Mammary epithelial cell (primary cell): ENCODE measurements at regions of chr9 and their contacts with region 1.

Region 1: DNA sequence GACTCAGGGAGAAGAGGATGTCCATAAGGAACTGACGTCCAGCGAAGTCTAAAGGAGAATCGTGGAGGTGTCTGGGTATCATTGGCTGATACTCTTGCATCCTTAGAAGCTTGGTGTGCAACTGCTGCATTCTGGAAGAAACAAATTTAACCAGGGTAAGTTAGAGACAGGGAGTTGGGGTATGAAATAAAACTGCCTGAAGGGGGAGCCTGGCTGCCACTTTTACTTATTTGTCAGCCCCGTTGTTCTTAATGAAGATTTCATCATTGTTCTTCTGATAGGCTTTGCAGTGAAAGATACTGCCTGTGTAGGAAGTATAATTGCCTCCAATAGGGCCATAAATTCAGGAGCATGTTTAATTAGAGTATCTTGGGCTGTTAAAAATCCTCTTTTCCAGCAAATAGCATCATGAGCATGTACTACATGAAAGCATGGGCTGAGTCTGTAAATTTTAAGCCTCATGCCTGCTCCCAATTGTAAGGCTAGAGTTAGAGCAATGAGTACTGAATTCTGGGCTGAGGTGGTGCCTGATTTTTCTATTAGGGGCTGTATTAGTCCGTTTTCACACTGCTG is 1264.5 kb upstream of the ACO1 start:
- DNase-seq: peak; percentile 55
- H3K4me3 ChIP-seq: no peak overlapping the region
- H3K27ac ChIP-seq: no peak overlapping the region
- H3K4me1 ChIP-seq: no peaks in the 10 kb centered on the region
- H3K27me3 ChIP-seq: no peaks in the 10 kb centered on the region
- CTCF ChIP-seq: peak; percentile 67 to 74

Region 2: DNA sequence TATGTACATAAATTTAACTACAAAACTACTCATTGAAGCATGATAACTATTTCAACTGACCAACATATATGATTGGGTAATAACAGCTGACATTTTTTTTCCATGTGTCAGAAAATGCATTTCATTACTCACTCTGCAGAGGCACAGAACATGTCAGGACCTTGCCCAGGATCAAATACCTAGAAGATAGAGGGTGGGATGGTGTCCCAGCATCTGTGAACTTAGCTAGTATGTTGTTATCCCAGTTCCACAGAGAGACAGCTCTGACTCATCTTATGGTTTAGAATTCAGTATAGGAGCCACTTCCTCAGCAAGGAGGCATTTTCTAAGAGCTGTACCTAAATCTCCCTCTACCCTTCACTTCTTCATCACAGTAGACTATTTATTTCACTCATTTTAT is 65.9 kb after region 1 on chr9:
- CTCF ChIA-PET with region 1: no interaction called
- dilution Hi-C with region 1: no loop called
- in situ Hi-C with region 1: no loop called
- intact Hi-C with region 1: loop called (anchors 5 kb)
- DNase-seq: peak; percentile 96
- H3K4me3 ChIP-seq: no peak overlapping the region
- H3K27ac ChIP-seq: peak overlapping the region; percentile 71
- H3K4me1 ChIP-seq: peaks cover 26% of the 10 kb centered on the region
- H3K27me3 ChIP-seq: no peaks in the 10 kb centered on the region
- CTCF ChIP-seq: no peak

Region 3: DNA sequence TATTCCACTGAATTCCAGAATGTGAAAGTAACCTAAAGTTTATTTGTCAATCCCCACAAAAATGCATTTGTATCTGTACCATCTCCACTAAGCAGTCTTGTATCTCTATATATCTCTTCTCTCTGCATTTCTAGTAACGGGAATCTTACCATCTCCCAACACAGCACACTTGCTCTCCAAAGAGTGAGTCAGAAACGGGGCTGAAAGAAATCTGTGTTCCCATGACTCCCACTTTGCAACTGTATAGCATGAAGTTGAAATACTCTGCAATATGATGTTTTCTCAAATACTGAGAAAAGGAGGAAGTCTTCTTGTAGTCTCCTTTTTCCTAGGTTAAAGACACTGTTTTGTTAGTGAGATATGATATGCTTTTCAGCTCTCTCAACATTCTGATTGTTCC is 415.7 kb after region 1 on chr9:
- CTCF ChIA-PET with region 1: no interaction called
- dilution Hi-C with region 1: no loop called
- in situ Hi-C with region 1: no loop called
- intact Hi-C with region 1: loop called (anchors 10 kb)
- DNase-seq: no peak
- H3K4me3 ChIP-seq: no peak overlapping the region
- H3K27ac ChIP-seq: no peak overlapping the region
- H3K4me1 ChIP-seq: no peaks in the 10 kb centered on the region
- H3K27me3 ChIP-seq: no peaks in the 10 kb centered on the region
- CTCF ChIP-seq: no peak

Region 4: DNA sequence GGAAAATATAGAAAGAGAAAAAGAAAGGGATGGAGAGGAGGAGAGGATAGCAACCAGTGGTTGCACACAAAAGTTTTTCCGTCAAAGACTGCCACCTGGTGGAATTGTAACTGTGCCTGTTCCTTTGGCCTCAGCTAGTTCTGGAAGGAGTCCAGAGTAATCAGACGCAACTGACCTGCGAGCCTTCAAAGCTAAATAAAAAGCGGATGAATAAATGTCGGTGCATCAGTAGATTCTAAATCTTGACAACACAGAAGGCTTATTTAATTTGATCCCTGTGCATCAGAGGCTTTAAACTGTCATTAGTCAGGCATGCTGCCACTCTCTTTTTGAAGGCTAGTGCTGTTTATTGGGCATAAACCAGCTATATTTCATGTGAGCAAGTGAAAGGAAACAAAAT is 1131.6 kb after region 1 on chr9:
- CTCF ChIA-PET with region 1: no interaction called
- dilution Hi-C with region 1: no loop called
- in situ Hi-C with region 1: no loop called
- intact Hi-C with region 1: loop called (anchors 10 kb)
- DNase-seq: peak; percentile 51
- H3K4me3 ChIP-seq: no peak overlapping the region
- H3K27ac ChIP-seq: no peak overlapping the region
- H3K4me1 ChIP-seq: no peaks in the 10 kb centered on the region
- H3K27me3 ChIP-seq: no peaks in the 10 kb centered on the region
- CTCF ChIP-seq: peak; percentile 73 to 82